ENCODE measurements at regions of chr6 and their contacts with region 1.

Region 1: GRCh38 chr6:35640017-35640664 is 48.6 kb downstream of the FKBP5 start:
- DNase-seq: no peak
- ATAC-seq: no peak
- H3K4me3 Mint-ChIP-seq: no peak overlapping the region
- H3K27ac Mint-ChIP-seq: no peak overlapping the region
- H3K4me1 Mint-ChIP-seq: peaks cover 33% of the 10 kb centered on the region
- H3K27me3 Mint-ChIP-seq: no peaks in the 10 kb centered on the region

Region 2: DNA sequence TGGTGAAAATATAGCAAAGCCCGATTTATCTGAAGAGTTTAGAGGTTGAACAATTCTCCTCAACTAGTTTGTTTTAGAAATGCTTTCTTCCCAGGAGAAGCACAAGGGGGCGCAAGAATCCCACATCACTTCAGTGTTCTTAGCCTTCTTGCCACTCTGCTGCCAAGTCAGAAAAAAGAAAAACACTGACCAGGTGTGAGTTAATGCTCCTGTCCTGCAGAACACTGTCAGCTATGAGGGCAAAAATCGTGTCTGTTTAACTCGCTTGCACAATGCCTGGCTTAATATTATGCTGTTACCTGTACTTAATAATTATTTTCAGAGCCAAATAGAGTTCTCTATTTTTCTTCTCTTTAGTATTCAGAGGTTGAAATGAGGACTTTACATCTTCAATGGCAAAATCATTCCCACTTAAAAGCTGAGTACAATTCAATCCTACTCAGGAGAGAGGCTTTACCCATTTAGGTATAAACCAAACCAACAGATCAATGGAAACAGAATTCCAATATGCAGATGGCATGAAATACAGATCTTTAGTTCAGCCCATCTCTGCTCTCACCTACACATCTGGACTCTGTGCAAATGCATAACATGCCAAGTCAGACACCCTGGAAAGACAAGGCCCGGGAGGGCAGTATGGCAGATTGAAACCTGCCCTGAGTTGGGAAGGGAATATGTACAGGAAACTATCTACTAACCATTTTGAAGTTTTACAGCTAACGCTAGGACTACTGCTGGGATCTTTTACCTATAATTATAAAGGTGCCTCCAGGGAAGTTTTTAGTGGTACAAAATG is 56.0 kb before region 1 on chr6:
- CTCF ChIA-PET with region 1: interaction called, 13 read pairs
- DNase-seq: peak; percentile 81
- ATAC-seq: peak; percentile 74
- H3K4me3 Mint-ChIP-seq: no peak overlapping the region
- H3K27ac Mint-ChIP-seq: peak overlapping the region; percentile 22
- H3K4me1 Mint-ChIP-seq: peaks cover 15% of the 10 kb centered on the region
- H3K27me3 Mint-ChIP-seq: no peaks in the 10 kb centered on the region